Activated B cell treated with CpG ODN at 0.5 μM for 24 hours (primary cell): ENCODE measurements at regions of chr7 and their contacts with region 1.

Region 1: DNA sequence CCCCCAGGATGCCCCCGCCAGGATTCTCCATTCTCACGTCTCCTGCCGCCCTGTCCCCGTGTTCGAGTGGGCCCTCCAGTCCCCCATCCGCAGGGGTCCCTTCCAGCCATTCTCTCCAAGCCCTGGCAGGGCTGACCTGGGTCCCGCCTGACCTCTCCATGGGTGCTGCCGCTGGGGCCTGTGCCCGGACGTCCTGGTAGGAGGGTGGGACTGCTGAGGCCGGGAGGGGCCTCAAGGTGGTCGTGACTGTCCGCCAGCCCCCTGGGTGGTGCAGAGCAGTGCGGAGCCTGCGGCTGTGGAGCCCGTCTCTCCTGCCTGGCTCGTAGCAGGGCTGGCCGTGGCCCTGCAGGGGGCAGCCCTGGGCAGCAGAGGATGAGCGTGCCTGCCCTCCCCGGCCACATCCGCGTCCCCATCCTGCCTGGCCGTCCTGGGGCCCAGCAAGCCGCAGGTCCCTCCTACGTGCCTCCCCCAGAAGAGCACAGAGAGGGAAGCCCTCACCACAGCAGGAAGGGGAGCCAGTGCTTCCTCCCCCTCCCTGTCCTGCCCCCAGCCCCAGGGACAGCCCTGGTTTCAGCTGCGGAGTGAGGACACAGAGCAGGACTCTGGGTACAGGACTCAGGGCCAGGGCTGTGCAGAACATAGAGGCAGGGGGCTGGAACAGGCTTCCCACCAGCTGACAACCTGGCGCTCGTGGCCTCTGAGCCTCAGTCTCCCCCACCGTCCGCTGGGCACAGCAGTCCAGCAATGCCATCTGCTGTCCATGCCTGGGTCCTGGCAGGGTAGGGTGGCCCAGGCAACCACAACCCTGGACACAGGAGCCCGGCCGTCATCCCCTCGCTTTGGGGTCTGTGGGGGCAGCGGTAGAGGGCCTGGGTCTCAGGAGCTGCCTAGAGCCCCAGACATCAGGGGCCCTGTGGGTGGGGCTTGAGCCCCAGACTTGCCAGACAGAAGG is 1.5 kb upstream of the GRIFIN start:
- DNase-seq: peak; percentile 66
- ATAC-seq: peak; percentile 98
- H3K4me3 Mint-ChIP-seq: no peak overlapping the region
- H3K27ac Mint-ChIP-seq: no peak overlapping the region
- H3K4me1 Mint-ChIP-seq: peaks cover 11% of the 10 kb centered on the region
- H3K27me3 Mint-ChIP-seq: no peaks in the 10 kb centered on the region
- CTCF ChIP-seq: peak; percentile 68

Region 2: GRCh38 chr7:2508327-2509215 is 30.8 kb after region 1 on chr7:
- CTCF ChIA-PET with region 1: no interaction called
- POLR2A ChIA-PET with region 1: interaction called, 5 read pairs
- intact Hi-C with region 1: loop called (anchors 2 kb)
- DNase-seq: peak; percentile 62
- ATAC-seq: peak; percentile 51
- H3K4me3 Mint-ChIP-seq: peak overlapping the region; percentile 65
- H3K27ac Mint-ChIP-seq: peak overlapping the region; percentile 95
- H3K4me1 Mint-ChIP-seq: peaks cover 68% of the 10 kb centered on the region
- H3K27me3 Mint-ChIP-seq: no peaks in the 10 kb centered on the region
- CTCF ChIP-seq: no peak

Region 3: GRCh38 chr7:2519119-2519930 is 41.6 kb after region 1 on chr7 and contains the start of gene LFNG:
- CTCF ChIA-PET with region 1: no interaction called
- POLR2A ChIA-PET with region 1: interaction called, 10 read pairs
- intact Hi-C with region 1: no loop called
- DNase-seq: peak; percentile 94
- ATAC-seq: peak; percentile 75
- H3K4me3 Mint-ChIP-seq: peak within 1 kb of the TSS; percentile 96
- H3K27ac Mint-ChIP-seq: peak within 1 kb of the TSS; percentile 87
- H3K4me1 Mint-ChIP-seq: peaks cover 49% of the 10 kb centered on the region
- H3K27me3 Mint-ChIP-seq: no peaks in the 10 kb centered on the region
- CTCF ChIP-seq: no peak
- total RNA-seq, gene LFNG: 87.4 and 95.8 TPM in 2 replicates

Region 4: DNA sequence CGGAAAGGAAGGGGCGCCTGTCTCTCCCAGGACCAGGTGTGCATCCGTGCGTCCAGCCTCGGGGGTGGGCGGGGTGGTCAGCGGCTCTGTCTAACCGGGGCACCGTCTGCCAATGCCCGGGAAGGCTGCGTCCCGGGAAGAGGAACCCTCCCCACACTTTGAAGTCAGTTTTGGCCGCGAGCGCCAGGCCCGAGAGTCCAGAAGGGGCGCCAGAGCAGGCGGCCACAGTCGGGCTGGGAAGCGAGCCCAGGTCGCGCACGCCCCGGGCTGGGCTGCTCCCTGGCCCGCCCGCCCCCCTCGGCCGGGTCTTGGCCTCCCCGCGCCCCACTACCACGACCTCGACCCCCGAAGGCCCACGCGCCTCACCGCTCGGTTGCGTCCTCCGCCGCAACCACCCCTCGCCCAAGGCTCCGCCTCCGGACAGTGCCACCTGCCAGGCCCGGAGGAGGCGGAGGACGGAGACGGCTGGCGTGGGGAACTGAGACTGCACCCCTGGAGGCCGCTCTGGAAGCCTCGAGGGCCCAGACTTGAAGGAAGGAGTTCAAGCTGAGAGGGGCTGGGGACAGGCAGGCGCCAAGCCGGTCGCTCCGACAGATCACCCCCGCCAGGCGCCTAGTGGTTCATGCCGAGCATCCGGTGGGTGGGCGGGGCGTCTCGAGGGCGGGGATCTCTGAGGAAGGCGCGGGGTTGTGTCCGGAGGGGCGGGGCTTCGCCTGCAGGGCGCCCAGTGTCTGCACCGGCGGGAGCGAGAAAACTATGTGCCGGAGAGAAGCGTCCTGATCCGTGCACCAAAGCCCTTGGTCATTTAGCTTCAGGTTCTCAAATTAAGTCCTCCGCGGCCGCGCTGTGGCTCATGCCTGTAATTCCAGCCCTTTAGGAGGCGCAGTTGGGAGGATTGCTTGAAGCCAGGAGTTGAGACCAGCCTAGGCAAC is 77.7 kb after region 1 on chr7 and contains the start of gene BRAT1:
- CTCF ChIA-PET with region 1: no interaction called
- POLR2A ChIA-PET with region 1: no interaction called
- intact Hi-C with region 1: loop called (anchors 1 kb)
- DNase-seq: peak; percentile 89
- ATAC-seq: peak; percentile 86
- H3K4me3 Mint-ChIP-seq: peak within 1 kb of the TSS; percentile 87
- H3K27ac Mint-ChIP-seq: peak within 1 kb of the TSS; percentile 92
- H3K4me1 Mint-ChIP-seq: peaks cover 45% of the 10 kb centered on the region
- H3K27me3 Mint-ChIP-seq: no peaks in the 10 kb centered on the region
- CTCF ChIP-seq: no peak
- total RNA-seq, gene BRAT1: 29.6 and 31.7 TPM in 2 replicates

Region 5: DNA sequence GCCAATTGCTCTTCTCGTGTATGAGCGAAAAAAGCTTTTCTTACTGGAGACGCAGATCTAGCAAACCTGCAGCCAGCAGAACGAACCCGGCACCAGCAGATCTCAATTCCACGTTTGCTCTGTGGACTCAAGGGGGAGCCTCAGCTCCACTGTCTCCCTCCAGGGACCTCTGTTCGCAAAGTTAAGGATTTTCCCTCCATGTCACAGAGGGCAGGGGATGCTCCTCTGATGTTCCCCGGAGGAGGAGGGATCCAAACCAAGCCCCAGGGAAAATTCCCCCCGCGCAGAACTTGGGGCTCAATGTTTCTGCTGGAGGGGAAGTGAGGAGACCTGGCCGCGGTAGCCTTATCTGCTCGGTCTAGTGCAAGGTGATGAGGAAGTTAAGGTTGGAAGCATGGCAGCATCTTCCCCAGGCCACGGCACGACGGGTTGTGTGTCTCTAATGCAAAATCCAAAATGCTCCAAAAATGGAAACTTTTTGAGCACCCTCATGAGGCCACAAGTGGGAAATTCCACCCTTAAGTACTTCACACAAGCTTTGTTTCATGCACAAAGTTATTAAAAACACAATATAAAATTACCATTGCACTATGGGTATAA is 90.1 kb after region 1 on chr7:
- CTCF ChIA-PET with region 1: no interaction called
- POLR2A ChIA-PET with region 1: no interaction called
- intact Hi-C with region 1: loop called (anchors 1 kb)
- DNase-seq: no peak
- ATAC-seq: peak; percentile 58
- H3K4me3 Mint-ChIP-seq: no peak overlapping the region
- H3K27ac Mint-ChIP-seq: no peak overlapping the region
- H3K4me1 Mint-ChIP-seq: peaks cover 18% of the 10 kb centered on the region
- H3K27me3 Mint-ChIP-seq: no peaks in the 10 kb centered on the region
- CTCF ChIP-seq: no peak

Region 6: GRCh38 chr7:2608921-2609411 is 131.2 kb after region 1 on chr7:
- CTCF ChIA-PET with region 1: no interaction called
- POLR2A ChIA-PET with region 1: no interaction called
- intact Hi-C with region 1: loop called (anchors 2 kb)
- DNase-seq: no peak
- ATAC-seq: peak; percentile 93
- H3K4me3 Mint-ChIP-seq: peak overlapping the region; percentile 71
- H3K27ac Mint-ChIP-seq: peak overlapping the region; percentile 50
- H3K4me1 Mint-ChIP-seq: peaks cover 27% of the 10 kb centered on the region
- H3K27me3 Mint-ChIP-seq: no peaks in the 10 kb centered on the region
- CTCF ChIP-seq: no peak

Region 7: DNA sequence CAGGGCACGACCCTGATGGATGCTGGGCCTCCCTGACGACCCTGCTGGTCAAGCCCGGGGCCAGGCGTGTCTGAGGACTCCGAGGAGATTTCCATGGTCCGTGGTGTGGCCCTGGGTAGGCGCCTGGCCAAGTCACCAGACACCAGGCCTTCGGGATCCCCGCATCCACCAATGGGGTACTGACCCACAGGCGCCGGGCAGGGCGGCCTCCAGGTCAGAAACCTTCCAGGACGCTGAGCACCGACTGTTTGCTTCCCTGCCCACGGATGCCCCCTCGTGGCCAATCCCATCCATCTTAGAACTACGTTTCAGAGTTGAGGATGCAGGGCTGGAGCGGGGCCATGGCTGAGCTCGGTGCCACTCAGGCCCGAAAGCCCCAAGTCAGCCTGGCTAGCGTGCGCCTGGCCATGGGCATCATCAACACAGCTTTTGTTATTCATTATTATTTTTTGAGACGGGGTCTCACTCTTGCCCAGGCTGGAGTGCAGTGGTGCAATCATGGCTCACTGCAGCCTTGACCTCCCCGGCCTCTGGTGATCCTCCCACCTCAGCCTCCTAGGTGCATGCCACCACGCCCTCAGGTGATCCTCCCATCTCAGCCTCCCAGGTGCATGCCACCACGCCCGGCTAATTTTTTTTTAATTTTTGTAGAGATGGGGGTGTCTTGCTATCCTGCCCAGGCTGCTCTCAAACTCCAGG is 203.2 kb after region 1 on chr7:
- CTCF ChIA-PET with region 1: interaction called, 9 read pairs
- POLR2A ChIA-PET with region 1: no interaction called
- intact Hi-C with region 1: loop called (anchors 1 kb)
- DNase-seq: peak; percentile 55
- ATAC-seq: peak; percentile 73
- H3K4me3 Mint-ChIP-seq: no peak overlapping the region
- H3K27ac Mint-ChIP-seq: no peak overlapping the region
- H3K4me1 Mint-ChIP-seq: no peaks in the 10 kb centered on the region
- H3K27me3 Mint-ChIP-seq: peaks cover 2% of the 10 kb centered on the region
- CTCF ChIP-seq: no peak